ENCODE measurements at regions of chr1 and their contacts with region 1.

Region 1: DNA sequence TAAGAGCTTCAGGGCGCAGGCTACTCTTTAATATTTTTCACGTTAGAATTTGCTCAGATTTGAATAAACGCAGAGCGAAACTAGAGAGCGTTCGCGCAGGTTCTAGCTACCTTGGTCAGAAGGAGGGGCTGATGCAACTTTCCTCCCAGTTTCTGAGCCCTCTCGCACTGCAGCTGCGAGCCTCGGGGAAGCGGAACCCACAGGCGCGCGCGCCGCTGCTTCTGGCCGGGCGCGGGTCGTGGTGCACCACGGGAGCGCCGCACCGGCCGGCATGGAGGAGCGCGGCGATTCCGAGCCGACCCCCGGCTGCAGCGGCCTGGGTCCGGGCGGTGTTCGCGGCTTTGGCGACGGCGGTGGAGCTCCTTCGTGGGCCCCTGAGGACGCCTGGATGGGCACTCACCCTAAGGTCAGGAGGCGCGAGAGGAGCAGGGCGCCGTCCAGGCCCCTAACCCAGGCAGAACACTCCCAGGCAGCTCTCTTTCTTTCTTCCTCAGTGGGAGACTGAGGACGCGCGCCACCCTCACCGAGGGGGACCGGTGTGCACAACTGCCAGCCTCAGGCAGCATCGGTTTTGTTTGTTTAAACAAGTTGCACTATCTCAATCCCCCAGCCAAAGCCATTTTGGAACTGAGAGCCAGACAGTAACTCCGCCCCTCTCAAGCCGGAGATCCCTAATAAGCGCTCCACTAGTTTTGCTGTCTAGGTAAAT is at the start of gene TSEN15:
- DNase-seq: peak; percentile 38 to 79 (median 68)
- ATAC-seq: peak; percentile 95 to 98
- H3K4me3 Mint-ChIP-seq: peak within 1 kb of the TSS; percentile 95 to 100 (median 98)
- H3K27ac Mint-ChIP-seq: peak within 1 kb of the TSS; percentile 94 to 100 (median 96)
- H3K4me1 Mint-ChIP-seq: peaks cover 20 to 43% (median 41%) of the 10 kb centered on the region in 4 donors
- H3K27me3 Mint-ChIP-seq: peaks cover 5 to 29% (median 12%) of the 10 kb centered on the region in 5 donors
- polyA plus RNA-seq, gene TSEN15: 48.7 to 63.8 (median 51.2) TPM

Region 2: GRCh38 chr1:183956559-183957188 is 95.0 kb before region 1 on chr1:
- POLR2A ChIA-PET with region 1: interaction called, 26 read pairs
- DNase-seq: peak in 9 of 10 donors; percentile 35 to 82 (median 61)
- ATAC-seq: peak; percentile 98 to 100
- H3K4me3 Mint-ChIP-seq: peak overlapping the region in 9 of 10 donors; percentile 20 to 70 (median 49)
- H3K27ac Mint-ChIP-seq: peak overlapping the region in 1 of 10 donors; percentile 91
- H3K4me1 Mint-ChIP-seq: peaks cover 0 to 18% (median 7%) of the 10 kb centered on the region in 4 donors
- H3K27me3 Mint-ChIP-seq: no peaks in the 10 kb centered on the region